Psoas muscle (tissue), 8 donors: ENCODE measurements at regions of chr20 and their contacts with region 1.

Region 1: GRCh38 chr20:34069341-34070078 is 42.5 kb downstream of the EIF2S2 start:
- DNase-seq: peak; percentile 63 to 79
- ATAC-seq: peak; percentile 90 to 95 (median 92)
- H3K4me3 ChIP-seq: no peak overlapping the region
- H3K27ac ChIP-seq: peak overlapping the region; percentile 73
- H3K4me1 ChIP-seq: peaks cover 24% of the 10 kb centered on the region
- H3K27me3 ChIP-seq: no peaks in the 10 kb centered on the region
- CTCF ChIP-seq: peak; percentile 87

Region 2: DNA sequence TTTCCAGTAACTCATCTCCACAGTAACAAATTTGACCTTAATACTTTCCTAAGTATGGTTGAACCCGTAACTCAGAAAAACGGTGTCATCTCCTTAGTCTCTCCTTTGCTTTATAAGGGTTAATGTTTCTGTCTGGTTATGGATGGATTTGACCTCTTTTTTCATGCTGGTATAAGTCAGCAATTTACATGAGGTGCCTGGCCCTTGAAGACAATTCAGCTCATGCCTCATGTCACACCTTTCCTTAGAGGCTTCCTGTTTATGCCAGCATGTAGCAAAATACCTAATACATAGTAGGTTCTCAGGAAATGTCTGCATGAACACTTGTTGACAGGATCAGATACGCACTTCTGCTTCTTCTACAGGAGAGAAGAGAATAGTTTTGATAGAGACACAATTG is 445.1 kb before region 1 on chr20:
- intact Hi-C with region 1: no loop called
- DNase-seq: no peak
- ATAC-seq: no peak
- H3K4me3 ChIP-seq: no peak overlapping the region
- H3K27ac ChIP-seq: no peak overlapping the region
- H3K4me1 ChIP-seq: no peaks in the 10 kb centered on the region
- H3K27me3 ChIP-seq: no peaks in the 10 kb centered on the region
- CTCF ChIP-seq: no peak

Region 3: GRCh38 chr20:33862709-33863403 is 206.7 kb before region 1 on chr20:
- intact Hi-C with region 1: loop called (anchors 2 to 5 kb)
- DNase-seq: peak; percentile 40 to 65
- ATAC-seq: peak; percentile 50 to 68 (median 64)
- H3K4me3 ChIP-seq: peak overlapping the region; percentile 22
- H3K27ac ChIP-seq: no peak overlapping the region
- H3K4me1 ChIP-seq: peaks cover 4% of the 10 kb centered on the region
- H3K27me3 ChIP-seq: no peaks in the 10 kb centered on the region
- CTCF ChIP-seq: peak; percentile 54

Region 4: DNA sequence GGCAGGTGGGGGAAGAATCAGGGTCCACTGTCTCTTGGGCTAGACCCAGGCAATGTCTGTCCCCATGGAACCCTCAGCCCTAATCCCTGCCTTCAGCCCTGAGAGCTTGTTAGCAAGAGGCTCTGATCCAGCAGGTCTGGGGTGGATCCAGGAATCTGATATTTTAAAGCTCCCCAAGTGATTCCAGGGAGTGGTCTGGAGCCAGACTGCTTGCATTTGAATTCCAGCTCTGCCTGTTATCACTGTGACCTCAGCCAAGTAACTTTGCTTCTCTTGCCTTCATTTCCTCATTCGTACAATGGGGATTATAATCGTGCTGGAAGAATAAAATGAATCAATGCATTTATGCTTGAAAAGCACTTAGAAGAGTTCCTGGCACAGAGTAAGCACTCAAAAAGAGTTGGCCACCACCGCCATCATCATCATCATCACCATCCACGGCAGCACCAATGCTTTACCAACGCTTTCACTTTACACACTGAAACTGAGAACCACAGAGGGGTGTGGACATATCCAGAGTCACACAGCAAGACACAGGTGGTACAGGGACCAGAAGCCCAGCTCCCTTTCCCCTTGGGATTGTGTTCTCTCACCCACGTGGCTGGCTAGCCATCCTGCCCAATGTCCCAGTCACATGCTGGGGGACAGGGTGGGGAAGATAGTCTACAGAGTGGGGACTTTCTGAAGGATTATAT is 151.5 kb before region 1 on chr20:
- intact Hi-C with region 1: loop called in 1 of 2 experiments (anchors 1 kb)
- DNase-seq: no peak
- ATAC-seq: no peak
- H3K4me3 ChIP-seq: no peak overlapping the region
- H3K27ac ChIP-seq: no peak overlapping the region
- H3K4me1 ChIP-seq: no peaks in the 10 kb centered on the region
- H3K27me3 ChIP-seq: no peaks in the 10 kb centered on the region
- CTCF ChIP-seq: no peak

Region 5: DNA sequence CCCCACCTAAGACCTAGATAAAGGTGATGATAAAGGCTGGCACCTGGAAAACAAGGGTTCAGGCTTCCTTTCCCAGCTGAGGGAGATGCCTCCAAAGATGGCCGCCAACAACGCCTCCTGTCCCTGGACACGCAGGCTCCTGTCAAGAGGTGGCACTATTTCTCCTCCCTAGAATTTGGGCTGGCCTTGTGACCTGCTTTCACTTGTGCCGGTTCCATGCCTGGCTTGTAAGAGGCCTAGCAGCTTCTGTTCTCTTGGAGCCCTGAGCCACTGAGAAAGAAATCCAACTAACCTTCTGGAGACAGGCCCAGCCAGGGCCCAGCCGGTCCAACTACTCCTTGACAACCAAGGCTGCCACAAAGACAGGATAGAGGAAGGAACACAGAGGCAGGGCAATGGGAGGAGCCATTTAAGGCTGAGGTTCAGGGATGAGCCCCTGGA is 136.0 kb before region 1 on chr20:
- intact Hi-C with region 1: loop called (anchors 1 to 5 kb)
- DNase-seq: peak; percentile 54 to 75
- ATAC-seq: peak; percentile 88 to 97 (median 94)
- H3K4me3 ChIP-seq: no peak overlapping the region
- H3K27ac ChIP-seq: no peak overlapping the region
- H3K4me1 ChIP-seq: no peaks in the 10 kb centered on the region
- H3K27me3 ChIP-seq: no peaks in the 10 kb centered on the region
- CTCF ChIP-seq: peak; percentile 43

Region 6: DNA sequence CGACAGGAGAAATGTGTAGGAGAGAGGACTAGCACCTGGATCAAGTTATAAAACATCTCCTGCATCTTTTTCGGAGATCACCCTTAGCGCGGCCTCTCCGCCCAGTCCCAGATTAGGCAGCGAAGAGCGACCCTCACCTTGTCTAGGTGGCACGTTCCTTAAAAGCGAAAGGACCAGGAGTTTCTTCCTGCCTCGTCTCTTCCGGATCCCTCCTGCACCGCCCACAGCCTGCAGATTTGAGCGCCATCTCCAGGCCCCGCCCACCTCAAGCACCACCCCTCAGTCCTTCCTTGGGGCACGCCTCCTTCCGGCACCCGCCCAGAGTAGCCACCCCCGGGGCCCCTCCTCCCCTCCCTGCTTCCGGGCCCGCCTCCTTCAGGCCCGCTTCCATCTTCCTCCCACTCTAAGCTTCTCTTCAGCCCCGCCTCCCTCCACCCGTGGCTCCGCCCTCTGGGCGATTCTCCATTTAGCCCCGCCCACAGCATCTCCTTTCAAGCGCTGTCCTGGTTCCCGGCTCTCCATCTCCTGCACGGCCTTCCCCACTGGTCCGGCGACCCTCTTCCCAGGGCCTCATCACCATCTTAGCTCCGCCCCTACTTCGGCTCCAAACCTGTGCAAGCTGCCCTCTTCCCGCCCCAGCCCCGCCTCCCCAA is 76.5 kb before region 1 on chr20:
- intact Hi-C with region 1: loop called in 1 of 2 experiments (anchors 5 kb)
- DNase-seq: peak; percentile 99 to 100
- ATAC-seq: peak; percentile 91 to 94 (median 92)
- H3K4me3 ChIP-seq: peak overlapping the region; percentile 80
- H3K27ac ChIP-seq: peak overlapping the region; percentile 96
- H3K4me1 ChIP-seq: peaks cover 39% of the 10 kb centered on the region
- H3K27me3 ChIP-seq: no peaks in the 10 kb centered on the region
- CTCF ChIP-seq: no peak

Region 7: DNA sequence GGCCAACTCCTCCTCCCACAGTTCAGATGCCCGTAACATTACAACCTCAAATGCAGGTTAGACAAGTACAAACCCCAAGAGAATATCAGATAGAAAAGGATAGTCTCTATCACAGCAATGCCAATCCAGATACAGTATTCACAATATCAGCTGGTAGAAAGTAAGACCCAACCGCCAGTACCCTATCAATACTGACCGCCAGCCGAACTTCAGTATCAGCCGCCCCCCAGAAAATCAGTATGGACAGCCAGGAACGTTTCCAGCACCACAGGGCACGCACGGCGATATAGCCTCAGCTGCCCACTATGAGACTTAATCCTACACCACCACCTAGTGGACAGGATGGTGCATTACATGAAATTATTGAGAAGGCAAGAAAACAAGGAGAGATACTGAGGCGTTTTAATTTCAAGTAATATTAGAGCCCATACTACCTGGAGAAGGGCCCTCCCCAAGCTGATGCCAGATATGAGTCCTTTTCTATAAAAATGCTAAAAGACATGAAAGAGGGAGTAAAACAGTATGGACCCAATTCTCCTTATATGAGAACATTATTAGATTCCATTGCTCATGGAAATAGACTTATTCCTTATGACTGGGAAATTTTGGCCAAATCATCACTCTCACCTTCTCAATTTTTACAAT is 60.1 kb after region 1 on chr20:
- intact Hi-C with region 1: loop called in 1 of 2 experiments (anchors 10 kb)
- DNase-seq: peak; percentile 37 to 70
- ATAC-seq: peak; percentile 86 to 97 (median 94)
- H3K4me3 ChIP-seq: peak overlapping the region; percentile 31
- H3K27ac ChIP-seq: no peak overlapping the region
- H3K4me1 ChIP-seq: peaks cover 2% of the 10 kb centered on the region
- H3K27me3 ChIP-seq: no peaks in the 10 kb centered on the region
- CTCF ChIP-seq: peak; percentile 93